ENCODE measurements at regions of chr1 and their contacts with region 1.

Region 1: DNA sequence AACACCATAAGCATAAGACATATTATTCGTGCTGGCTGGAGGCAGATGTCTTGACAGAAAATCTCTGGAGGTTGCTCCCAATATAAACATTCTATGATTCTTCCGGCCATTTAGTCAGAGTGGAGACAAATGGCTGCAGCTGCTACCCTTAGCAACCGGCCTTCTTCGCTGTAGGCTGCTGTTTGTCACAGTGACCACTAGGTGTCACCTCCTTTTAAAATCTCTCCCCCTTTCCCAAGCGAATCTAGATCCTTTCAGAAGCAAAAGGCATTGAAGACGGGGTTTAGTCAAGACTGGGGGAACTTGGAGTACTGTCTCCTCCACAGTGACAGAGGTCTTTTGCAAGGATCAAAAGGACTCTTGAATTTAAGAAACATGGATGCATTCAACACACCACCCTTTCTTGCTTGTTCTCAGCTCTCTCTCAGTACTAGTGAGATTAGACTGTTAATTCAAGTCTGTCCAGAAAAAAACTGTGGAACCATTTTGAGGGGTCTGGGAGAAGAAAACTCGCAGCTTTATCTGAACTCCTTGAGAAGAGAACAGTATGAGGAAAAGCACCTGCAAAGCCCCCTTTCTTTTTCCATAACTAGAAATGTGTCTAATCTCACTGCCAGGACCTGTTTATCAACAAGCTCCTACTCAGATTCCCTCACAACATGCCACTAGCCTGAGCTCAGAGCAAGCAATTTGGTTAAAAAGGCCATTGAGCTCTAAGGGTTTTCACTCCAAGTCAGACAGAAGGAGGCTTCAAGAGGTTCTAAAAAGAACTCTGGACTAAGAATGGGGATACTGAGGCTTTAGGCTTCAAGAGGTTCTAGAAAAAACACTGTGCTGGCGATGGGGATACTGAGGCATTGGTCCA is 408.3 kb upstream of the PLXNA2 start:
- DNase-seq: peak; percentile 43
- ATAC-seq: peak; percentile 74
- H3K4me3 Mint-ChIP-seq: no peak overlapping the region
- H3K27ac Mint-ChIP-seq: no peak overlapping the region
- H3K4me1 Mint-ChIP-seq: no peaks in the 10 kb centered on the region
- H3K27me3 Mint-ChIP-seq: peaks cover 10% of the 10 kb centered on the region
- CTCF ChIP-seq: peak; percentile 68

Region 2: GRCh38 chr1:208724079-208724478 is 71.6 kb after region 1 on chr1:
- CTCF ChIA-PET with region 1: no interaction called
- POLR2A ChIA-PET with region 1: no interaction called
- intact Hi-C with region 1: no loop called
- DNase-seq: no peak
- ATAC-seq: no peak
- H3K4me3 Mint-ChIP-seq: no peak overlapping the region
- H3K27ac Mint-ChIP-seq: no peak overlapping the region
- H3K4me1 Mint-ChIP-seq: no peaks in the 10 kb centered on the region
- H3K27me3 Mint-ChIP-seq: no peaks in the 10 kb centered on the region
- CTCF ChIP-seq: no peak

Region 3: GRCh38 chr1:208834381-208835096 is 182.0 kb after region 1 on chr1:
- CTCF ChIA-PET with region 1: no interaction called
- POLR2A ChIA-PET with region 1: no interaction called
- intact Hi-C with region 1: no loop called
- DNase-seq: no peak
- ATAC-seq: no peak
- H3K4me3 Mint-ChIP-seq: no peak overlapping the region
- H3K27ac Mint-ChIP-seq: no peak overlapping the region
- H3K4me1 Mint-ChIP-seq: no peaks in the 10 kb centered on the region
- H3K27me3 Mint-ChIP-seq: peaks cover 2% of the 10 kb centered on the region
- CTCF ChIP-seq: no peak

Region 4: DNA sequence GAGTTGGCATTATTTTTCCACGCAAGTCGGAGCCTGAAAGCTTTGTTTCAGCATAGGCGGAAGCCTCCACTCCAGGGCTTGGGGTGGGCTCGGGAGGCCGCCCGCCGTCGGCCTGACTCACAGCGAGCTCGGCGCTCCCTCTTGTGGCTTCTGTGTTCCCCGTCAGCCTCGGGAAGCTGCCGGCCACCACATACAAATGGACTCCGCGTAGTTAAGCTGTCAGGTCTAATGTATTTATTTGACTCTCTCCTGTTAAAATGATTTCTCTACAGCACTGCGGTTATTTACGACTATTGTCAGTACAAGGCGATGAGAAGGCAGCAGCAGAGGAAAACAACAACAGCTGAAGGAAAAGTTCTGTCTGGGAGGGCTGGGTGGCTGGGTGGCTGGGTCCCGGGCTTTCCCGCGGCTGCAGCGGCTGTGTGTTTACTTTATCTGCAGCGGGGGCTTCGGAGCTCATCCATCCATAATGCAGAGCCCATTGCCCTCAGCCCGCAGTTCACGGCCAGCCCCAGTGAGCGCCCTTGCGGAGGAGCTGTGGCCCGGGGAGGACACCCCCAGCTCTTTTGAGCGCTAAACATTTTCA is 555.3 kb after region 1 on chr1:
- CTCF ChIA-PET with region 1: interaction called, 10 read pairs
- POLR2A ChIA-PET with region 1: no interaction called
- intact Hi-C with region 1: loop called (anchors 10 kb)
- DNase-seq: peak; percentile 58
- ATAC-seq: peak; percentile 60
- H3K4me3 Mint-ChIP-seq: no peak overlapping the region
- H3K27ac Mint-ChIP-seq: no peak overlapping the region
- H3K4me1 Mint-ChIP-seq: peaks cover 2% of the 10 kb centered on the region
- H3K27me3 Mint-ChIP-seq: peaks cover 36% of the 10 kb centered on the region
- CTCF ChIP-seq: peak; percentile 55